Dendritic cell treated with granulocyte-macrophage colony-stimulating factor and Interleukin-4, amounts not matched to agents 40 ng/mL and 50 ng/mL, for 4 days (primary cell): ENCODE measurements at regions of chr7 and their contacts with region 1.

Region 1: DNA sequence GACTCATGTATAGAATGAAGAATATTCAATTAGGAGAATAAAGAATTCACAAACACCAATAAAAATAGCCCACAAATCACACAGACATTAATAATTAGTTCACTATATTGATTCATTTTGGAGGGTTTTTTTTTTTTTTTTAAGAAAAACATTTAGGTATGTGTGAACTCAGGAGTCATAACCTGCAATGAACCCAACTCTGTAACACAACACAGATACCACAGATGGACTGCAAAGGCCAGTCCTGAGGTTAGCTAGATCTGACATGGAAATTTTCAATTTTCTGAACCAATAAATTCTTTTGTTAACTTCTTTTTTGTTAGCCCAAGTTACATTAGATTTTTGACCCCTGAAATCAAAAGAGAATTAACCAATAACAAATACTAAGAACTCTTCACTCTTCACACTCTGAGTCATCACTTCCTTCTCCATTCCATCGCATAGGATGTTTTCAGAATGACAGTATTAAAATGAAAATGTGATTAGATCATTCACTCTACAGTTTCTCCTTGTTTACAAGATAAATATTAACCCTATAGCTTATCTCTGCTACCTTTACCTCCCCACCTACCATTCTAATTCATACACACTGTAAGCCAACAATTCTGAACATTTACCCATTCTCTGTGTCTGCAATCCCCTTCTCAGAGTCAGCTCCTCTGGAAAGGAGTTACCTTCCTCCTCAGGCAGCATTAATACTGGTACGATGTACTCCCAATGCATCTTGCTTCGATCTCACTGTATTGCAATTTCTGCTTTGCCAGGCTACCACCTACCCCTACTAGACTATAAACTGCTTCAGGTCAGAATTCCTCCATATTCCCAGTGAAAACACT is 141.5 kb downstream of the LRRN3 start:
- H3K4me3 Mint-ChIP-seq: peak overlapping the region; percentile 18
- H3K27ac Mint-ChIP-seq: peak overlapping the region; percentile 82
- H3K4me1 Mint-ChIP-seq: peaks cover 24% of the 10 kb centered on the region
- H3K27me3 Mint-ChIP-seq: no peaks in the 10 kb centered on the region

Region 2: GRCh38 chr7:111138196-111138569 is 94.3 kb before region 1 on chr7:
- intact Hi-C with region 1: loop called (anchors 5 kb)
- H3K4me3 Mint-ChIP-seq: no peak overlapping the region
- H3K27ac Mint-ChIP-seq: peak overlapping the region; percentile 91
- H3K4me1 Mint-ChIP-seq: peaks cover 10% of the 10 kb centered on the region
- H3K27me3 Mint-ChIP-seq: no peaks in the 10 kb centered on the region

Region 3: DNA sequence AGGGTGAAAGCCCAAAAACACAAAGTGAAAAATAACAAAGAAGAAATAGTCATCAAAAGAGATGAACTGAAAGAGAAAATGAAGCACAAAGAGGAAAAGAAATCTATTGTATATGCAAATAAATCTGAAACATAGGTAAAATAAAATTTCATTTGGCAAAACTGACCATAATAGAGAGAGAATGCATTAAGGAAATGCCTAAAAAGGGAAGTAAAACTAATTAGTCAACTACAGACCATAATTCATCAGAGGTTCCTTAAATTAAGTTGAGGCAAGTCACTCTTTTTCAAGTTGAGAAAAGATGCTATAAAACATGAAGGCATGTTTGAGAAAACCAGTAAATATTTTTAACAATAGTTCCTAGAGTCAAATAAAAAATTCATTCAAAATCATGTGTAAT is 91.8 kb after region 1 on chr7:
- intact Hi-C with region 1: loop called (anchors 5 kb)
- H3K4me3 Mint-ChIP-seq: no peak overlapping the region
- H3K27ac Mint-ChIP-seq: no peak overlapping the region
- H3K4me1 Mint-ChIP-seq: peaks cover 23% of the 10 kb centered on the region
- H3K27me3 Mint-ChIP-seq: no peaks in the 10 kb centered on the region

Region 4: DNA sequence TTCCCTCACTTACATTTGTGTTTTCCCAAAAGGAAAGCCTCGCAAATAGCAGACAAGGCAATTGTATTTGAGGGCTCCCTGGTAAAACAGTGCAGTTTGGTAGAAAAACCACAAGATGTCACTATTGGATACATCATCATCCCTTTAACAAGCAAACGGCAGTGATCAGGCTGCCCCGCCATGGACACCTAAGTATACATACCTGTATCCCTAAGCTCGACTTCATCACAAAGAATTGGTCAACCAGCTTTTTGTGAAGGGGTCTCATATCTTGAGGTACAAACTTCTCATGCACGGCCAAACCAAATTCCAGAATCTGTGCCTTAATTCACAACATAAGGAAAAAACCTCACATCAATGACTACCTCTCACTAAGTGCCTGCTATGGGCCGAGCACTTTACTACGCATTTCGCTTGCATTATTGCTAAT is 509.4 kb after region 1 on chr7:
- intact Hi-C with region 1: loop called (anchors 5 kb)
- H3K4me3 Mint-ChIP-seq: no peak overlapping the region
- H3K27ac Mint-ChIP-seq: no peak overlapping the region
- H3K4me1 Mint-ChIP-seq: peaks cover 4% of the 10 kb centered on the region
- H3K27me3 Mint-ChIP-seq: no peaks in the 10 kb centered on the region